Calu3 (cell line): ENCODE measurements at regions of chr1 and their contacts with region 1.

Region 1: DNA sequence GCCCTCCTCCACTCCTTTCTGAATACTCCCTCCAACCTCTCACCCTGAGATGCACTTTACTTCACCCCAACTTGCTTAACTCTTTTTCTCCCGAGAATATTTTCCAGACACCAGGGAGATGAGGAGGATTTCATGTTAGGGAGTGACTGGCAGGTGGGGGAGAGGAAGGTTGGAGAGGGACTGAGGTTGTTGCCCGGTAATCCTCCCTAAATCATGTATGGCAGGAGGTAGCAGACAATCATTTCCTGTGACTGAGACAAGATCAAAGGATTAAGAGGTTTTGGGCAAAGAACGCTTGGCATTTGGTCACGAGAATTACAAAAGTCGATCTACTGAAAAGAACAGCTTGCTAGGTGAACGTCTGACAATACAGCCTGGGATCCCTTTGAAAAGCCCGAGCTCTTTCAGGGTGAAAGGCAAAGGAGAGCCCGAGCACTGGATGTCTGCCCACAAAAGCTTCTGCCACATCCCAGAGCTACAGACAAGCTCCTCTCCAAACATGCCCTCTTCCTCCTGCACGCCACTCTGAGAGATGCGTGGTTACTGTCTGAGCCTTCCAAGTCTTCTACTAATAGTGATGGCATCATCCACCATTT is 154.1 kb downstream of the DAB1 start:
- DNase-seq: no peak
- H3K4me3 Mint-ChIP-seq: no peak overlapping the region
- H3K27ac Mint-ChIP-seq: no peak overlapping the region
- H3K4me1 Mint-ChIP-seq: no peaks in the 10 kb centered on the region
- H3K27me3 Mint-ChIP-seq: no peaks in the 10 kb centered on the region
- CTCF ChIP-seq: no peak

Region 2: GRCh38 chr1:57206038-57206437 is 63.7 kb before region 1 on chr1:
- CTCF ChIA-PET with region 1: no interaction called
- intact Hi-C with region 1: loop called (anchors 10 kb)
- DNase-seq: no peak
- H3K4me3 Mint-ChIP-seq: no peak overlapping the region
- H3K27ac Mint-ChIP-seq: no peak overlapping the region
- H3K4me1 Mint-ChIP-seq: no peaks in the 10 kb centered on the region
- H3K27me3 Mint-ChIP-seq: no peaks in the 10 kb centered on the region
- CTCF ChIP-seq: no peak